Activated CD4-positive, alpha-beta T cell treated with anti-CD3 and anti-CD28 coated beads for 36 hours (primary cell): ENCODE measurements at regions of chr1 and their contacts with region 1.

Region 1: DNA sequence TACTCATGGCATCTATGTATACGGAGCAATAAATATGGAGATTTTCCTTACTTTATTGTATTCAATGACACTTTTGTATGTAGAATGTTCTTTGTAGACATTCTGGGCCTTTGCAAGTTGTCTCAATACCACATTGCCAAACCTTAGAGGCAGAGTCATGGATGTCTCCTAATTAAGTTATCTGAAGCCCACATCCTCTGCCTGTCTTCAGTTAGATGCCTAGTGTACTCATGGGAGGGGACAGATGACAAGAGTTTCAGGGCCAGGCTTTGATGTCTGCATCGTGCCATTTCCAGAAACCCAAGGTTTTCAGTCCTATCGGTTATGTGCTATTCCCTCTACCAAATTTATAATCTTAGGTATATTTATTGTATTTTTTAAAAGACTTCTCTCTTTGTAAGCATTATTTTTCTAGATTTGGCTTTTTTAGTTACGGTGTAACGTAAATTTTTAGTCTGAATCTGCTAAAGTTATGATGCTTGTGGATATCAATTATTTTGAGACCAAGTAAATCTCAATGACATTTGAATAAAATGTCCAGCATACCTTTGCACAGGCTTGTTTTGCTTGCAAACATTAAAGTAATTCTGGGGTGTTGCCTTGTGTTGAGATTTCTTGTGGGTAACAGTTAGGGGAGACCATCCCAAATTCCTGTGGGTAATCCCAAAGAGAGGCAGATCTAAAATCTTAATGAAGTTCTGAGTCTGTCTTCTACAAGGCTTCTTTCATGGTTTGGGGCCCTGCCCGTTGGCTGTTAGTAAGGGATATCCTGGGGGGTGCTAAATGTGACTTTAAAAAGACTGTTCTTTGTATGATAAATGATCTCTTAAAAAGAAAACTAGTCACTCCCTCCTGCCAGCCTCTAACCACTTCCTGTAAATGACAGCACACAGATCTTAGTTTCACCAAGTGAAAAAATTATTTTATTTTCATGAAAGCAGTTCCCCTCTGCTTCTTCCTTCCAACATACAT is 8.0 kb upstream of the MACF1 start:
- DNase-seq: peak; percentile 78
- ATAC-seq: peak; percentile 42
- H3K4me3 Mint-ChIP-seq: peak overlapping the region; percentile 54
- H3K27ac Mint-ChIP-seq: peak overlapping the region; percentile 87
- H3K4me1 Mint-ChIP-seq: peaks cover 84% of the 10 kb centered on the region
- H3K27me3 Mint-ChIP-seq: no peaks in the 10 kb centered on the region

Region 2: GRCh38 chr1:37851782-37852210 is 1344.7 kb before region 1 on chr1:
- CTCF ChIA-PET with region 1: no interaction called
- POLR2A ChIA-PET with region 1: no interaction called
- intact Hi-C with region 1: no loop called
- DNase-seq: peak; percentile 10
- ATAC-seq: peak; percentile 66
- H3K4me3 Mint-ChIP-seq: no peak overlapping the region
- H3K27ac Mint-ChIP-seq: no peak overlapping the region
- H3K4me1 Mint-ChIP-seq: peaks cover 45% of the 10 kb centered on the region
- H3K27me3 Mint-ChIP-seq: no peaks in the 10 kb centered on the region

Region 3: GRCh38 chr1:38859561-38860453 is 336.7 kb before region 1 on chr1 and contains the start of gene RRAGC:
- CTCF ChIA-PET with region 1: no interaction called
- POLR2A ChIA-PET with region 1: no interaction called
- intact Hi-C with region 1: loop called (anchors 1 to 10 kb)
- DNase-seq: peak; percentile 99
- ATAC-seq: peak; percentile 98
- H3K4me3 Mint-ChIP-seq: peak within 1 kb of the TSS; percentile 98
- H3K27ac Mint-ChIP-seq: peak within 1 kb of the TSS; percentile 91
- H3K4me1 Mint-ChIP-seq: peaks cover 58% of the 10 kb centered on the region
- H3K27me3 Mint-ChIP-seq: no peaks in the 10 kb centered on the region
- total RNA-seq, gene RRAGC: 15.8 to 19.0 TPM

Region 4: GRCh38 chr1:39183503-39184353 is 12.8 kb before region 1 on chr1:
- CTCF ChIA-PET with region 1: interaction called, 32 read pairs
- POLR2A ChIA-PET with region 1: interaction called, 11 read pairs
- intact Hi-C with region 1: loop called (anchors 1 kb)
- DNase-seq: peak; percentile 90
- ATAC-seq: peak; percentile 84
- H3K4me3 Mint-ChIP-seq: peak overlapping the region; percentile 30
- H3K27ac Mint-ChIP-seq: peak overlapping the region; percentile 98
- H3K4me1 Mint-ChIP-seq: peaks cover 50% of the 10 kb centered on the region
- H3K27me3 Mint-ChIP-seq: no peaks in the 10 kb centered on the region

Region 5: DNA sequence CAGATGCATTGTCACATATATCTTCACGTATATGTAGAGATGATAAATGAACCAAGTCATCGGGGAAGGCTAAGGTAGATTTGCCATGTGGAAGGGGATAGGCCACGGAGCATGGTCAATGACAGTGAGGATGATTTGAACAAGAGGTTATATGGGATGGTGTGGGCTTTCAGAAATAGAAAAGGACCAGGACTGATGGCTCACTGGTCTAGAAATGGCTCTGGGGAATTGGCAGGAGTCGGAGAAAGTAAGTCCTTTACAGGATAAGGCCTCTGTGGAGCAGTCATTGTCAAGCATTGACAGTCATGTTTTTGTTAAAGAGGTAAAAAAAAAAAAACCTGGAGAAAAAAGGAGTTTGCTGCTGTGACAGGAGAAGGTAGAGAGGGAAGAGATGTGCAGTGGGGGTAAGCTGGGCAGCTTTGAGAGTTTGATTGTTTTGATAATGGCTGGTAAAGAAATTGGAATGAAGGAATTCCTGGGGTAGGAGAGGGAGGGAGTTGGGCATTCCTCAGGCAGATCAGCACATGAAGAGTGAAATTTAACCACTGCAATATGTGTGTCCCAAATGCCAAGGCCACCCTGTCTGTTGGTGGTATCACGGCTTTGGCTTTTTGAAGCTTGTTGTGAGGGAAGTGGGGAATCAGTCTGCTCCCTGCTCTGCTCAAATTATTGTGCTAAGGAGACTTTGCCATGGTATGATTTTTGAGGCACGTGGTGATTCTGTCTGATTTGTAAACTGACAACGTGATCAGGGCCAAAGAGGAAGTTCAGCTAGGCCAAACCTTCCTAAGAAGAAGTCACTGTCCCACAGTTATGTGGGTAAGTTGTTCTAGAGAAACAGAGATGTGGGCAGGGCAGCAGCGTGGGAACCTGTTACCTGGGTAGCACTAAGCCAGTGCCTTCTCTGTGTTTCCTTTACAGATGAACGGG is 34.0 kb after region 1 on chr1:
- CTCF ChIA-PET with region 1: interaction called, 5 read pairs
- POLR2A ChIA-PET with region 1: no interaction called
- intact Hi-C with region 1: loop called in 1 of 2 experiments (anchors 2 kb)
- DNase-seq: peak; percentile 42
- ATAC-seq: peak; percentile 75
- H3K4me3 Mint-ChIP-seq: peak overlapping the region; percentile 27
- H3K27ac Mint-ChIP-seq: peak overlapping the region; percentile 59
- H3K4me1 Mint-ChIP-seq: peaks cover 53% of the 10 kb centered on the region
- H3K27me3 Mint-ChIP-seq: no peaks in the 10 kb centered on the region

Region 6: DNA sequence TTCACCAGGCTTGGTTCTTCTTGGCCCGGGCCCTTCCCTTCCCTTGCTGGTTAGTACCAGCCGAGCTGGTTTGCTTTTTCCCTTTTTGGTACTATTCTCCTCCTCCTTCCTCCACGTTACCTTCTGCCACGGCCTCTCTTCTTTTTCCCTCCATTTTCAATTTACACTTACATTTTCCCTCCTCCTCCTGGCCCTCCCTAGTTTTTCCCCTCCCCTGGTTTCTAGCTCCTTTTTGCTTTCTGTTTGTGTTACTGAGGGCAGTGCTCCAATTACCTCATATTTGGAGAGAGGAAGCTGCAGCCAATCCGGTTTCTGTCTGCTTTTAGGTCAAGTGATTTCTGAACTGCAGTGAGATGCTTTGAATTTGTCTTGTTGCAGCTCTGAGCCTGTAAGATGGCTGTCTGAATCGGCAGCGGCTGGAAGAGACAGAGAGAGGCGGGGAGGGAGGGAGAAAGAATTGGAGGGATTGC is 71.6 kb after region 1 on chr1:
- CTCF ChIA-PET with region 1: interaction called, 174 read pairs
- POLR2A ChIA-PET with region 1: interaction called, 6 read pairs
- intact Hi-C with region 1: no loop called
- DNase-seq: peak; percentile 43
- ATAC-seq: peak; percentile 69
- H3K4me3 Mint-ChIP-seq: peak overlapping the region; percentile 57
- H3K27ac Mint-ChIP-seq: peak overlapping the region; percentile 88
- H3K4me1 Mint-ChIP-seq: peaks cover 79% of the 10 kb centered on the region
- H3K27me3 Mint-ChIP-seq: no peaks in the 10 kb centered on the region

Region 7: GRCh38 chr1:39321979-39322378 is 125.4 kb after region 1 on chr1:
- CTCF ChIA-PET with region 1: no interaction called
- POLR2A ChIA-PET with region 1: no interaction called
- intact Hi-C with region 1: no loop called
- DNase-seq: no peak
- ATAC-seq: no peak
- H3K4me3 Mint-ChIP-seq: no peak overlapping the region
- H3K27ac Mint-ChIP-seq: peak overlapping the region; percentile 56
- H3K4me1 Mint-ChIP-seq: peaks cover 12% of the 10 kb centered on the region
- H3K27me3 Mint-ChIP-seq: no peaks in the 10 kb centered on the region